Vagina (tissue), 2 donors: ENCODE measurements at regions of chr20 and their contacts with region 1.

Region 1: DNA sequence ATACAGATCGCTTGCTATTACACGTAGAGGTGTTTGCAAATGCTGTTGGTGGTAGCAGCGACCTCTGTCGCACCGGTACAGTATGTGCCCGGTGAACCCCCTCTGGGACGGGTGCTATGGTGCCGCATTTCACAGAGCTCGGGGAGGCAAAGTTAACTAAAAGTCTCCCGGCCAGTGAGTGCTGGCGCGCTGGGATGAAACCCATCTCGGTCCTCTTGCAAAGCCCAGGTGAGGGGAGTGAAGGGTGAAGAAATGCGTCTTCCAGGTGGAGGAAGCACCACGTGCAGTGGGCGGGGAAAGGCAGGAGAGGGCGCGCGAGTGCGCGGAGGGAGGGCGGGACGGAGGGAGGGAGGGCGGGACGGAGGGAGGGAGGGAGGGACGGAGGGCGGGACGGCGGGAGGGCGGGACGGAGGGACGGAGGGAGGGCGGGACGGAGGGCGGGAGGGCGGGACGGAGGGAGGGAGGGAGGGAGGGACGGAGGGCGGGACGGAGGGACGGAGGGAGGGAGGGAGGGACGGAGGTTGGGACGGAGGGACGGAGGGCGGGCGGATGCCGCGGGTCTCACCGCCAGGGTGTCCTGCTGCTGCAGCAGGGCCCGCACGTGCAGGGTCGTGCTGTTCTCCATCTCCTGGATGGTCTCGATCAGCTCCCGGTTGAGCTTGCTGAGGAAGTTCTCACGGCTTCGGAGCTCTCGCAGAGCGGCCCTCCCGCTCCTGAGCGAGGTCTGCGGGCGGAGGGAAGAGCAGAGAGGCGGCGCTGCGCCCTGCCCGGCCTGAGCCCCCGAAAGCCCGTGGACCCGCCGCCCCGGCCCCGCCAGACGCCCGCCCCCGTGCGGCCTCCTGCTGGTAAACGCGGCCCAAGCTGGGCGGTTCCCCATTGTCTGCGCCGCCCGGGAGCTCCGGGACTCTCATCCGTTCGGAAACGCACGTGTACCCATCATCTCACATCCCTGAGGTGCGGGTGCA is 11.7 kb downstream of the C20orf96 start:
- DNase-seq: peak in 1 of 2 donors; percentile 62
- H3K4me3 ChIP-seq: peak overlapping the region in 1 of 2 donors; percentile 33
- H3K27ac ChIP-seq: no peak overlapping the region
- H3K4me1 ChIP-seq: no peaks in the 10 kb centered on the region
- H3K27me3 ChIP-seq: no peaks in the 10 kb centered on the region
- CTCF ChIP-seq: no peak
- POLR2A ChIP-seq: no peak

Region 2: DNA sequence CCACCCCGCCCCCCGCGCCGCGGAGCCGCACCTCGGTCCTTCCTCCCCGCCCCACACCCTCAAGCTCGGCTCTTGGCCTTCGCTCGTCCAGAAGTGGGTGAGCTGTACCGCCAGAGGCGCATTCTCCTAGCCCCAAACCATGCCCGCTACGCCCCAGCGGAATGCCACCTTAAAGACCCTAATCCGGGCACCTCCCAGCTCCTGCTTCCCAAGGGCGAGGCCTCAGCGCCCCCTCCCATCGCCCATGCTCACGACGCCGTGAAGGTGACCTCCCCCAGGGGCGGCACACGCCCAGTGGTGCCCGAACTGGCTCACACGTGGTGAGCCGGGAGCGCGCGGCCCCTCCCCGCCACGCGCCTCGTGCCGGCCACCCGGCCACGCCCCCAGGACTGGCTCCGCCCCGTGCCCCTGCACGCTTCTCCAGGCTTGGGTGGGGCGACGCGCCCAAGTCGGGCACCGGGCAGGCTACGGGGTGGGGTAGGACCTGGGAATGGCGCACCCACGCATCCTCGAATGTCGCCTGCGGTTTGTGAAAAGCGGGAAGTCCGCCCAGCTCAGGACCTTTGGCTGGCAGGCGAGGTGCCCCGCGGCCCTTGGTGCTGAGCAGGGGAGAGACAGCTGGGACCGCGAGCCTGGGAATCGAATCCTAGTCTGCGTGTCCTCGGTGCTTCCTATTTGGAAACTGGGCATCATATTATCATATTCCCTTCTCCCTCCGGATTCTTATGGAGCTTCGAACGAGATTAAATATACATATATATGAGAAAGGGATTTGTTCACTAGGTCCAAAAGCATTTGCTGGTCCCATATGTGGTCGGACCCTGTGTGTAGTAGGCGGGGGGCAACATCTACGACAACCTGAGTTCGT is 45.5 kb after region 1 on chr20:
- intact Hi-C with region 1: loop called (anchors 10 kb)
- DNase-seq: no peak
- H3K4me3 ChIP-seq: peak overlapping the region; percentile 69 to 97
- H3K27ac ChIP-seq: peak overlapping the region; percentile 96
- H3K4me1 ChIP-seq: peaks cover 46% of the 10 kb centered on the region
- H3K27me3 ChIP-seq: no peaks in the 10 kb centered on the region
- CTCF ChIP-seq: peak in 1 of 3 experiments; percentile 12
- POLR2A ChIP-seq: peak in 1 of 2 donors; percentile 54

Region 3: GRCh38 chr20:391041-391711 is 112.3 kb after region 1 on chr20:
- intact Hi-C with region 1: no loop called
- DNase-seq: no peak
- H3K4me3 ChIP-seq: no peak overlapping the region
- H3K27ac ChIP-seq: no peak overlapping the region
- H3K4me1 ChIP-seq: no peaks in the 10 kb centered on the region
- H3K27me3 ChIP-seq: no peaks in the 10 kb centered on the region
- CTCF ChIP-seq: no peak
- POLR2A ChIP-seq: no peak